BJ (cell line): ENCODE measurements at regions of chr2 and their contacts with region 1.

Region 1: DNA sequence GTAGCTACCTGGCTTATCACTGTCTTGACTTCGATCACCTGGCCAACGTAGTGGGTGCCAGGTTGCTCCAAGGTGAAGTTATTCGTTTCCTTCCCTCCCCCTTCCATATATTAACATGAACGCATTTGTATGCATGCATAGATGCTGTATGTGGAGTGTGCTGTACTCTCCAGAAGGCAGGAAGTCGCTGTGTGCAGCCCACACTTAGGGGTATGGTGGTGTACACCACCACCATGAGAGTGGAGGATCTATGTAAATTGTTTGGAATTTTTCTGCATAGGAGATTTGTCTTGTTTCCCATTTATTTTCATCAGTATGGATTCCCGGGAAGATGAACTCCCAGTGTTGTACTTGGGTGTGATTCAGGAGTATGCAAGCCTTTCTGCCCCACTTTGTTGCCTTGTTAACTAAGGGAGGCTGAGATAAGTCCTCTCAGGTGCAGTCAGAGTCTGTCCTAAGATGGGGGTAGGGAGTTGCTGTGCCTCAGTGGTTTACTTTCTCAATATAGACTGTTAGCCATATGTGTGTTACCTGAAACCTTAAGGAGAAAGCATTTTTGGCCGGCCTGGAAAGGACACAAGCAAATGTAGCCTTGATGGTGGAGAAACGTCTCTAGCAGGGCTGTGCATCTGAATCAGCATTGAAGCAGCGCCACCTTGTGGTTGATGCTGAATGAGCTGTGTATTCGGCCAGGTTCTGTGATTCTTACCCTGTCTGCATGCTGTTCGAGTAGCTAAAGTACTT is 149.8 kb downstream of the TANC1 start:
- DNase-seq: no peak
- H3K4me3 ChIP-seq: no peak overlapping the region
- H3K27me3 ChIP-seq: no peaks in the 10 kb centered on the region
- CTCF ChIP-seq: peak; percentile 90

Region 2: DNA sequence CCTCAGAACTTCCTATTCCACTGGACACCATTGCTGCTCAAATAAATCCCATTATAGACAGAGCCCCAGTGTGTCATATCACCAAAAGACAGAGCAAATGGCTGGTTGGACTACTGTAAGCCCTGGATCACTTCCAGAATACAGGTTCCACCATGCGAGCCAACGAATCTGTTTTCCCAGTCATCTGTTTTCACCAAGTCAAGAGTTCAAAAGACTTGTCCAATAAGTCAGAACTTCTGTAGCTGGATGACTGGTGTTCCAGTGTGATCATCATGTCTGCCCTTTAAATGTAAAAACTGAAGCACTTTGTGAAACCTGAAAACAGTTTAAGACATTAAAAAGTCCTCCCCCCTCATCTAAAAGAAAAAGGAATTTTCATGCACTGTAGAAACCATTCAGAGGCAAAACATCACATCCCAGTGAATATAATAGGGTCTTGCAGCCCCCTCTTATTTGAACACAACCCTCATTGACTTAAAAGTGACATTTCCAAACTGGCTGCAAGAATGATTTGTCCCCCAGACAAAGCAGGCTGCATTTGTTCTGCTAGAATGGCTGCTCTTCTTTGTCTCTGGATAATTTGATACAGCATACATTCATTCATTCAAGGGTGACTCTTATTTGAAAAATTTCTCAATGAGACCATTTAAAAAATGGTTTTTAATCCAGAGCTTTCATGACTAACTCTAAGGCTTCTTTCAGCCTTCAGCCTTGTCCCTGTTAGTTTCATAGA is 214.4 kb before region 1 on chr2:
- CTCF ChIA-PET with region 1: interaction called, 36 read pairs
- POLR2A ChIA-PET with region 1: no interaction called
- DNase-seq: no peak
- H3K4me3 ChIP-seq: no peak overlapping the region
- H3K27me3 ChIP-seq: no peaks in the 10 kb centered on the region
- CTCF ChIP-seq: no peak

Region 3: GRCh38 chr2:158968396-158969161 is 149.7 kb before region 1 on chr2 and contains the start of gene TANC1:
- CTCF ChIA-PET with region 1: interaction called, 14 read pairs
- POLR2A ChIA-PET with region 1: no interaction called
- DNase-seq: peak; percentile 47
- H3K4me3 ChIP-seq: peak within 1 kb of the TSS; percentile 61
- H3K27me3 ChIP-seq: no peaks in the 10 kb centered on the region
- CTCF ChIP-seq: no peak
- polyA plus RNA-seq, gene TANC1: 19.9 and 22.0 TPM in 2 replicates

Region 4: DNA sequence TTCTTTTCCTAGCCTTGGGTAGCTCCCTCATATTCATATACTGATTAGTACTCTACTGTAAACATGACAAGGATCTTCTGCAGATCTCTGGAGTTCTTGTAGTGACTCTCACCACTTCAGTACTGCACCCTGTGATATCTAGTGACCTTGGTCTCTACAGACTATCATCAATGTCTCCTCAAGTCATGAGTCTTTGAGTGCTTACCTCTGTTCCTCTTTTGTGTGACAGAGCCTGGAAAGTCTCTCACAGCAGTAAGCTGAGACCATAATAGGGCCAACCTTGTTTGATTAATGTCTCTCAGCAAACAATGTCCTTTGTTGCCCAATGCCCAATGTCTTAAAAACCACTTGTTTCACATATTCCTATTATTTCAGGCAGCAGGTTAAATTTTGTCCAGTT is 532.3 kb after region 1 on chr2:
- CTCF ChIA-PET with region 1: no interaction called
- POLR2A ChIA-PET with region 1: no interaction called
- DNase-seq: no peak
- H3K4me3 ChIP-seq: no peak overlapping the region
- H3K27me3 ChIP-seq: no peaks in the 10 kb centered on the region
- CTCF ChIP-seq: no peak